ENCODE measurements at regions of chr16 and their contacts with region 1.

Region 1: GRCh38 chr16:22206013-22206841 is at the start of gene EEF2K:
- DNase-seq: peak; percentile 91
- ATAC-seq: peak; percentile 85
- H3K4me3 ChIP-seq: peak within 1 kb of the TSS; percentile 60 to 82 (median 80)
- H3K4me3 Mint-ChIP-seq: peak within 1 kb of the TSS; percentile 88
- H3K27ac ChIP-seq: peak within 1 kb of the TSS; percentile 68 to 86
- H3K27ac Mint-ChIP-seq: peak within 1 kb of the TSS; percentile 68
- H3K4me1 ChIP-seq: peaks cover 10 to 23% of the 10 kb centered on the region in 2 donors
- H3K4me1 Mint-ChIP-seq: peaks cover 25% of the 10 kb centered on the region
- H3K27me3 ChIP-seq: no peaks in the 10 kb centered on the region
- H3K27me3 Mint-ChIP-seq: no peaks in the 10 kb centered on the region
- CTCF ChIP-seq: peak; percentile 76
- total RNA-seq, gene EEF2K: 28.7 and 30.0 TPM in 2 replicates

Region 2: GRCh38 chr16:22217889-22218730 is 11.9 kb after region 1 on chr16:
- CTCF ChIA-PET with region 1: interaction called, 32 read pairs
- POLR2A ChIA-PET with region 1: interaction called, 4 read pairs
- intact Hi-C with region 1: loop called (anchors 1 kb)
- DNase-seq: peak; percentile 90
- ATAC-seq: peak; percentile 86
- H3K4me3 ChIP-seq: peak overlapping the region in 3 of 5 experiments; percentile 1 to 22 (median 15)
- H3K4me3 Mint-ChIP-seq: peak overlapping the region; percentile 75
- H3K27ac ChIP-seq: peak overlapping the region; percentile 60 to 76
- H3K27ac Mint-ChIP-seq: peak overlapping the region; percentile 91
- H3K4me1 ChIP-seq: peaks cover 21 to 35% of the 10 kb centered on the region in 2 donors
- H3K4me1 Mint-ChIP-seq: peaks cover 28% of the 10 kb centered on the region
- H3K27me3 ChIP-seq: no peaks in the 10 kb centered on the region
- H3K27me3 Mint-ChIP-seq: no peaks in the 10 kb centered on the region
- CTCF ChIP-seq: no peak

Region 3: GRCh38 chr16:22240023-22240710 is 33.9 kb after region 1 on chr16:
- CTCF ChIA-PET with region 1: interaction called, 6 read pairs
- POLR2A ChIA-PET with region 1: interaction called, 6 read pairs
- intact Hi-C with region 1: loop called (anchors 2 kb)
- DNase-seq: no peak
- ATAC-seq: no peak
- H3K4me3 ChIP-seq: no peak overlapping the region
- H3K4me3 Mint-ChIP-seq: no peak overlapping the region
- H3K27ac ChIP-seq: no peak overlapping the region
- H3K27ac Mint-ChIP-seq: no peak overlapping the region
- H3K4me1 ChIP-seq: peaks cover 12 to 27% of the 10 kb centered on the region in 2 donors
- H3K4me1 Mint-ChIP-seq: peaks cover 23% of the 10 kb centered on the region
- H3K27me3 ChIP-seq: no peaks in the 10 kb centered on the region
- H3K27me3 Mint-ChIP-seq: no peaks in the 10 kb centered on the region
- CTCF ChIP-seq: no peak

Measured in B cell (primary cell).